ENCODE measurements at regions of chr6 and their contacts with region 1.

Region 1: DNA sequence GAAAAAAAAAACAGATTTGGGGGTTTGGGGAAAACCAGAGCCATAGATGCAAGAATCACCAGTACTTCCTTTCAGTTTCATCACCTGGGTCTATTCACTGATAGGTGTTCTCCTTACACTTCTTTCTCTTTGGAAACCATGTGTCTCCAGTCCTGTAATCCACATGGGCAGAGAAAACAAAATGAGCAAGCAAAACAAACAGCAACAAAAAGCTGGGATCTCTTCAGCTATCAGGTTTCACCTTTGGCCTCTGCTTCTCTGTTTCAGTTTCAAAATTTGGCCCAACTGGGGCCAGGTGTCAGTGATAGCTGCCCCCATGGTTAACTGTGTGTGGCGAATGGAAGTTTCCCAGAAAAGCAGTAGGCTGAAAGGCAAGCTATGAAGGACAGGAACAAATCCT is 220.0 kb upstream of the THBS2 start:
- DNase-seq: no peak
- H3K4me3 ChIP-seq: no peak overlapping the region
- H3K27ac ChIP-seq: no peak overlapping the region
- H3K4me1 ChIP-seq: no peaks in the 10 kb centered on the region
- H3K27me3 ChIP-seq: no peaks in the 10 kb centered on the region
- CTCF ChIP-seq: no peak
- POLR2A ChIP-seq: no peak

Region 2: GRCh38 chr6:169371344-169372127 is 102.1 kb before region 1 on chr6:
- intact Hi-C with region 1: no loop called
- DNase-seq: no peak
- H3K4me3 ChIP-seq: no peak overlapping the region
- H3K27ac ChIP-seq: peak overlapping the region in 1 of 2 donors; percentile 10
- H3K4me1 ChIP-seq: no peaks in the 10 kb centered on the region
- H3K27me3 ChIP-seq: no peaks in the 10 kb centered on the region
- CTCF ChIP-seq: no peak
- POLR2A ChIP-seq: no peak

Region 3: GRCh38 chr6:169445661-169446581 is 27.7 kb before region 1 on chr6:
- intact Hi-C with region 1: no loop called
- DNase-seq: no peak
- H3K4me3 ChIP-seq: no peak overlapping the region
- H3K27ac ChIP-seq: no peak overlapping the region
- H3K4me1 ChIP-seq: no peaks in the 10 kb centered on the region
- H3K27me3 ChIP-seq: no peaks in the 10 kb centered on the region
- CTCF ChIP-seq: no peak
- POLR2A ChIP-seq: no peak

Region 4: GRCh38 chr6:169456840-169457239 is 16.8 kb before region 1 on chr6:
- intact Hi-C with region 1: loop called (anchors 2 kb)
- DNase-seq: no peak
- H3K4me3 ChIP-seq: no peak overlapping the region
- H3K27ac ChIP-seq: no peak overlapping the region
- H3K4me1 ChIP-seq: no peaks in the 10 kb centered on the region
- H3K27me3 ChIP-seq: no peaks in the 10 kb centered on the region
- CTCF ChIP-seq: no peak
- POLR2A ChIP-seq: no peak

Measured in breast epithelium (tissue), 4 donors.